IMR-90 (cell line): ENCODE measurements at regions of chr4 and their contacts with region 1.

Region 1: GRCh38 chr4:83618431-83618830 is 82.5 kb downstream of the GPAT3 start:
- DNase-seq: peak; percentile 85
- ATAC-seq: peak; percentile 84
- H3K4me3 ChIP-seq: no peak overlapping the region
- H3K27ac ChIP-seq: peak overlapping the region; percentile 26; the same call in 1 of the 2 replicates
- H3K4me1 ChIP-seq: peaks cover 4% of the 10 kb centered on the region
- H3K27me3 ChIP-seq: no peaks in the 10 kb centered on the region
- CTCF ChIP-seq: no peak
- POLR2A ChIP-seq: no peak
- RAD21 ChIP-seq: no peak

Region 2: DNA sequence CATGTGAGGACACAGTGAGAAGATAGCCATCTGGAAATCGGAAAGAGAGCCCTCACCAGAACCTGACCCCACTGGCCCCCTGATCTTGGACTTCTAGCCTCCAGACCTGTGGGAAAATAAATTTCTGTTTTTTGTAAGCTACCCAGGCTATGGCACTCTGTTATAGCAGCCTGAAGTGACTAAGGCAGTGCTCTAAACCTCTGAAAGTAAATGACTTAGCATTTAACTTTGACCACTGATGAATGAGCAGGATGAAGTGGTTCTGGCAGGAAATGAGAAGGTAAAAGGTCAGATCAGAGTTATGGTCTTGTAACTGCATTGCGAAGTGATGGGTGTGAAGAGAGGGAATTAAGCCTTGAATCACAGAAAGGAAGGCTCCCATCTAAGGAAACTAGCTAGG is 65.5 kb before region 1 on chr4:
- CTCF ChIA-PET with region 1: interaction called, 3 read pairs
- POLR2A ChIA-PET with region 1: no interaction called
- dilution Hi-C with region 1: no loop called
- in situ Hi-C with region 1: no loop called
- intact Hi-C with region 1: loop called (anchors 5 kb)
- DNase-seq: peak; percentile 67
- ATAC-seq: peak; percentile 66
- H3K4me3 ChIP-seq: no peak overlapping the region
- H3K27ac ChIP-seq: no peak overlapping the region
- H3K4me1 ChIP-seq: peaks cover 13% of the 10 kb centered on the region
- H3K27me3 ChIP-seq: no peaks in the 10 kb centered on the region
- CTCF ChIP-seq: no peak
- POLR2A ChIP-seq: no peak
- RAD21 ChIP-seq: no peak